ENCODE measurements at regions of chr12 and their contacts with region 1.

Region 1: GRCh38 chr12:24922090-24922489 is 26.8 kb downstream of the BCAT1 start:
- DNase-seq: no peak
- H3K4me3 ChIP-seq: no peak overlapping the region
- H3K27ac ChIP-seq: no peak overlapping the region
- H3K4me1 ChIP-seq: peaks cover 0 to 4% (median 3%) of the 10 kb centered on the region in 4 experiments; a peak in 5 of 7 replicates
- H3K27me3 ChIP-seq: no peaks in the 10 kb centered on the region
- CTCF ChIP-seq: no peak
- EP300 ChIP-seq: no peak
- POLR2A ChIP-seq: no peak
- RAD21 ChIP-seq: no peak

Region 2: GRCh38 chr12:24902511-24903328 is 19.4 kb before region 1 on chr12:
- CTCF ChIA-PET with region 1: interaction called, 3 read pairs
- POLR2A ChIA-PET with region 1: interaction called, 40 read pairs
- DNase-seq: peak in 1 of 2 experiments; percentile 77
- H3K4me3 ChIP-seq: peak overlapping the region; percentile 43 to 71 (median 62)
- H3K27ac ChIP-seq: no peak overlapping the region
- H3K4me1 ChIP-seq: peaks cover 0 to 18% (median 15%) of the 10 kb centered on the region in 4 experiments; a peak in 4 of 7 replicates
- H3K27me3 ChIP-seq: no peaks in the 10 kb centered on the region
- CTCF ChIP-seq: no peak
- EP300 ChIP-seq: no peak
- POLR2A ChIP-seq: peak in 1 of 2 experiments; percentile 75; a peak in 2 of 3 replicates
- RAD21 ChIP-seq: no peak

Measured in H1 (cell line).